CD4-positive, alpha-beta memory T cell (primary cell): ENCODE measurements at regions of chr13 and their contacts with region 1.

Region 1: DNA sequence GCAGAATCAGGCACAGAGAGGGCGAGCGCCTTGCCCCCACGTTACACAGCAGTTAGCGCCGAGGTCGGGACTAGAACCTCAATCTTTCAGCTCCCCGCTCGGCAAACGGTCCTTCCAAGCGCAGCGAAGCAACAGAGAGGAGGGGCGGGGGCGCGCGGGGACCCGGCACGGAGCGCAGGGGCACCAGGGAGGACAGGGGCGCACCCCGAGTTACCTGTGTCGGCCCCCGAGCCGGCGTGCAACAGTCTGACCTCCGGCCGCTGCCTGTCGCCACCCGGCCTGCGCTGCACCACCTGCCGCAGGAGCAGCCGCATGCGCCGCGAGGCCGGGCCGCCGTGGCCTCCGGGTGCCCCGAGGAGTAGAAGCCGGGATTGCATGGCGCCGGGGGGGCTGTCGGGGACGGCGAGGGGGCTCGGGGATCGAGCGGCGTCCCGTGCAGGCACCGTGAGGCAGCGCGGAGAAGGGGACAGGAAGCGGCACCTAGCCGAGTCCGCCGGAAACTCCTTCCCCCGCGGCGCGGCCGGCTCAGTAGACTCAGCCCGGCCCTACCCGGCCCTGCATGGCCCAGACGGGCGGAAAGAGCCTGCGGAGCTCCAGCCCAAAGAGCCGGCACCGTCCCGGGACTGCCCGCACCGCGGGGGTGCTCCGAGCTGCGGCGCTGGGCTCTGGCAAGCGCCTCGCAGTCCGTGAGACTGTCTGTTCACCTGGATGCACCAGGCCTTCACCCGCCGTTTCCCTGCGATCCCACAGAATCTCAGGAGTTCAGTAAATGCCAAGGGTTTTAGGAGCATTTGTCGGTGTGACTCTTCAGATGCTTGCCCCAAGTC is at the start of gene VWA8:
- DNase-seq: peak; percentile 81 to 84 (median 84)
- H3K4me3 ChIP-seq: peak within 1 kb of the TSS; percentile 55 to 64
- H3K4me3 Mint-ChIP-seq: peak within 1 kb of the TSS; percentile 92 to 97 (median 94)
- H3K27ac ChIP-seq: peak within 1 kb of the TSS; percentile 75
- H3K27ac Mint-ChIP-seq: peak within 1 kb of the TSS; percentile 87 to 98 (median 97)
- H3K4me1 ChIP-seq: peaks cover 36% of the 10 kb centered on the region
- H3K4me1 Mint-ChIP-seq: peaks cover 25 to 51% (median 38%) of the 10 kb centered on the region in 4 donors
- H3K27me3 ChIP-seq: no peaks in the 10 kb centered on the region
- H3K27me3 Mint-ChIP-seq: no peaks in the 10 kb centered on the region
- total RNA-seq, gene VWA8: 20.2 to 23.3 TPM

Region 2: GRCh38 chr13:41263261-41264027 is 697.4 kb before region 1 on chr13 and contains the start of gene MTRF1:
- CTCF ChIA-PET with region 1: no interaction called
- POLR2A ChIA-PET with region 1: interaction called, 3 read pairs
- intact Hi-C with region 1: loop called (anchors 1 kb)
- DNase-seq: peak; percentile 86 to 89 (median 87)
- H3K4me3 ChIP-seq: peak within 1 kb of the TSS; percentile 80 to 82
- H3K4me3 Mint-ChIP-seq: peak within 1 kb of the TSS; percentile 94 to 99 (median 98)
- H3K27ac ChIP-seq: peak within 1 kb of the TSS; percentile 67
- H3K27ac Mint-ChIP-seq: peak within 1 kb of the TSS; percentile 88 to 99 (median 98)
- H3K4me1 ChIP-seq: peaks cover 19% of the 10 kb centered on the region
- H3K4me1 Mint-ChIP-seq: peaks cover 13 to 18% (median 15%) of the 10 kb centered on the region in 4 donors
- H3K27me3 ChIP-seq: no peaks in the 10 kb centered on the region
- H3K27me3 Mint-ChIP-seq: no peaks in the 10 kb centered on the region
- total RNA-seq, gene MTRF1: 29.5 to 30.1 TPM

Region 3: DNA sequence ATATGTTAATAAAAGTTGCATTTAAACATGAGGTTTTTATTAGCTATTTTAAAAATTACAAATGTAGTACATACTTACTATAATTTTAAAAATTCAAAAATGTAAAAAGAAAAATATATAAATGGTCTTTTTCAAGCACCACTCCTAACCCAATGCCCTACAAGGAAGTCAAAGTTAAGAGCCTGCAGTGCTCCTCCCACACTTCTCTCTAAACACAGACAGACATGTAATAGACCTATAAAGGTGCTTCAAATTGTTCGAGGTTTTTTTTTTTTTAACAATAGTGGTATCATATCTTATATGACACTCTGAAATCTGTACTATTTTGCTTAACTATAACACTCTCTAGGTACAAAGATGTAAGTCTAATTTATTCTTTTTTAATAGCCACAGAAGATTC is 25.4 kb before region 1 on chr13:
- CTCF ChIA-PET with region 1: no interaction called
- POLR2A ChIA-PET with region 1: no interaction called
- intact Hi-C with region 1: no loop called
- DNase-seq: no peak
- H3K4me3 ChIP-seq: no peak overlapping the region
- H3K4me3 Mint-ChIP-seq: no peak overlapping the region
- H3K27ac ChIP-seq: no peak overlapping the region
- H3K27ac Mint-ChIP-seq: no peak overlapping the region
- H3K4me1 ChIP-seq: no peaks in the 10 kb centered on the region
- H3K4me1 Mint-ChIP-seq: peaks cover 16 to 26% (median 20%) of the 10 kb centered on the region in 4 donors
- H3K27me3 ChIP-seq: no peaks in the 10 kb centered on the region
- H3K27me3 Mint-ChIP-seq: no peaks in the 10 kb centered on the region

Region 4: DNA sequence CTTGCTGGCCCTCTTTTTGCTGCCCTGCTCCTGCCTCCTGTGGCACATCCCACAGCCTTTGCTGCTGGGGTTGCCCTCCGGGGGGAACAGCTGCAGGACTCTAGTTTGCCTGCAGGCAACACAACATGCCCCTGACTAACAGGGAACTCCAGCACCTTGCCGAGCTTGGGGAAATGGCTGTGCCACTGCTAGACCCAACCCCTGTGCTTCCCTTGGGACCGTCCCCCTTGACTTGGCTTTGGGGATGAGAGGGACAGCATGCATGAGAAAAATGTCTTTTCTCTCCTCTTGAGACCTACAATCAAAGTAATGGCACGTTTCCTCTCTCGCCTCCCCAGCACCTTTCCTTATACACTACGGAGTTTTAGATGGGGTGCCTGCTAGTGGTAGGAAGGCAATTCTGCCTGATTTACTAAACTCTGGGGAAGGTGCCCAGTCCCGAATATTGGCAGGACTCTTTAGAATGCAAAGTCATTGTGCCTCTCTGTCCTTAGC is 12.4 kb after region 1 on chr13:
- CTCF ChIA-PET with region 1: interaction called, 4 read pairs
- POLR2A ChIA-PET with region 1: interaction called, 14 read pairs
- intact Hi-C with region 1: loop called (anchors 1 kb)
- DNase-seq: peak in 1 of 5 donors; percentile 3
- H3K4me3 ChIP-seq: no peak overlapping the region
- H3K4me3 Mint-ChIP-seq: peak overlapping the region in 1 of 8 donors; percentile 34
- H3K27ac ChIP-seq: no peak overlapping the region
- H3K27ac Mint-ChIP-seq: peak overlapping the region in 5 of 7 donors; percentile 9 to 31 (median 19)
- H3K4me1 ChIP-seq: peaks cover 14% of the 10 kb centered on the region
- H3K4me1 Mint-ChIP-seq: peaks cover 18 to 50% (median 32%) of the 10 kb centered on the region in 4 donors
- H3K27me3 ChIP-seq: no peaks in the 10 kb centered on the region
- H3K27me3 Mint-ChIP-seq: no peaks in the 10 kb centered on the region

Region 5: GRCh38 chr13:42048682-42049453 is 88.0 kb after region 1 on chr13:
- CTCF ChIA-PET with region 1: no interaction called
- POLR2A ChIA-PET with region 1: interaction called, 12 read pairs
- intact Hi-C with region 1: no loop called
- DNase-seq: peak; percentile 51 to 71 (median 57)
- H3K4me3 ChIP-seq: peak overlapping the region; percentile 45 to 76
- H3K4me3 Mint-ChIP-seq: peak overlapping the region; percentile 82 to 93 (median 89)
- H3K27ac ChIP-seq: peak overlapping the region; percentile 53
- H3K27ac Mint-ChIP-seq: peak overlapping the region in 4 of 7 donors; percentile 61 to 88 (median 74)
- H3K4me1 ChIP-seq: peaks cover 12% of the 10 kb centered on the region
- H3K4me1 Mint-ChIP-seq: peaks cover 17 to 25% (median 19%) of the 10 kb centered on the region in 4 donors
- H3K27me3 ChIP-seq: no peaks in the 10 kb centered on the region
- H3K27me3 Mint-ChIP-seq: no peaks in the 10 kb centered on the region

Region 6: GRCh38 chr13:42991892-42992763 is 1031.3 kb after region 1 on chr13 and contains the start of gene EPSTI1:
- CTCF ChIA-PET with region 1: no interaction called
- POLR2A ChIA-PET with region 1: no interaction called
- intact Hi-C with region 1: loop called (anchors 5 kb)
- DNase-seq: peak; percentile 79 to 84 (median 81)
- H3K4me3 ChIP-seq: peak within 1 kb of the TSS; percentile 73 to 88
- H3K4me3 Mint-ChIP-seq: peak within 1 kb of the TSS; percentile 93 to 97 (median 96)
- H3K27ac ChIP-seq: peak within 1 kb of the TSS; percentile 95
- H3K27ac Mint-ChIP-seq: peak within 1 kb of the TSS; percentile 99 to 100 (median 99)
- H3K4me1 ChIP-seq: peaks cover 40% of the 10 kb centered on the region
- H3K4me1 Mint-ChIP-seq: peaks cover 35 to 63% (median 41%) of the 10 kb centered on the region in 4 donors
- H3K27me3 ChIP-seq: no peaks in the 10 kb centered on the region
- H3K27me3 Mint-ChIP-seq: no peaks in the 10 kb centered on the region
- total RNA-seq, gene EPSTI1: 17.1 to 19.4 TPM